Heart right ventricle (tissue), 16 donors: ENCODE measurements at regions of chr1 and their contacts with region 1.

Region 1: GRCh38 chr1:17045634-17046333 is 8.0 kb downstream of the SDHB start:
- DNase-seq: no peak
- ATAC-seq: peak; percentile 46 to 85 (median 68)
- H3K4me3 ChIP-seq: peak overlapping the region in 4 of 10 donors; percentile 18 to 31 (median 28)
- H3K27ac ChIP-seq: peak overlapping the region in 2 of 10 donors; percentile 2 to 54
- H3K4me1 ChIP-seq: peaks cover 0 to 42% (median 24%) of the 10 kb centered on the region in 9 donors
- H3K27me3 ChIP-seq: no peaks in the 10 kb centered on the region
- CTCF ChIP-seq: peak; percentile 55 to 88 (median 76)

Region 2: DNA sequence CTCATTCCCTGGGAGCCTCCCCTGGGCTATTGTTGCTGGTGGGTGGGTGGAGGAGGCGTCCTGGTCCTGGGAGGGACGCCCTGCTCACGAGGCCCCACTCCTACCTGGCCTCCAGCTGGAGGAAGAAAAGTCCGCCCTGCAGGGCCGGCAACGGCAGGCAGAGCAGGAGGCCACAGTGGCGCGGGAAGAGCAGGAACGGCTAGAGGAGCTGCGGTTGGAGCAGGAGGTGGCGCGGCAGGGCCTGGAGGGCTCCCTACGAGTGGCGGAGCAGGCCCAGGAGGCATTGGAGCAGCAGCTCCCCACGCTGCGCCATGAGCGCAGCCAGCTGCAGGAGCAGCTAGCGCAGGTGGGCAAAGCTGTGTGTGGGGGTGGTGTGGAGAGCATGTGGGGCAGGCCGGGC is 99.1 kb before region 1 on chr1:
- intact Hi-C with region 1: loop called in 9 of 10 experiments (anchors 1 to 5 kb)
- DNase-seq: no peak
- ATAC-seq: peak in 2 of 8 donors; percentile 9 to 19
- H3K4me3 ChIP-seq: no peak overlapping the region
- H3K27ac ChIP-seq: no peak overlapping the region
- H3K4me1 ChIP-seq: peaks cover 0 to 2% (median 0%) of the 10 kb centered on the region in 9 donors
- H3K27me3 ChIP-seq: no peaks in the 10 kb centered on the region
- CTCF ChIP-seq: no peak

Region 3: GRCh38 chr1:16954579-16954978 is 91.2 kb before region 1 on chr1:
- intact Hi-C with region 1: loop called (anchors 1 to 5 kb)
- DNase-seq: no peak
- ATAC-seq: no peak
- H3K4me3 ChIP-seq: no peak overlapping the region
- H3K27ac ChIP-seq: no peak overlapping the region
- H3K4me1 ChIP-seq: peaks cover 0 to 6% (median 0%) of the 10 kb centered on the region in 9 donors
- H3K27me3 ChIP-seq: no peaks in the 10 kb centered on the region
- CTCF ChIP-seq: no peak

Region 4: DNA sequence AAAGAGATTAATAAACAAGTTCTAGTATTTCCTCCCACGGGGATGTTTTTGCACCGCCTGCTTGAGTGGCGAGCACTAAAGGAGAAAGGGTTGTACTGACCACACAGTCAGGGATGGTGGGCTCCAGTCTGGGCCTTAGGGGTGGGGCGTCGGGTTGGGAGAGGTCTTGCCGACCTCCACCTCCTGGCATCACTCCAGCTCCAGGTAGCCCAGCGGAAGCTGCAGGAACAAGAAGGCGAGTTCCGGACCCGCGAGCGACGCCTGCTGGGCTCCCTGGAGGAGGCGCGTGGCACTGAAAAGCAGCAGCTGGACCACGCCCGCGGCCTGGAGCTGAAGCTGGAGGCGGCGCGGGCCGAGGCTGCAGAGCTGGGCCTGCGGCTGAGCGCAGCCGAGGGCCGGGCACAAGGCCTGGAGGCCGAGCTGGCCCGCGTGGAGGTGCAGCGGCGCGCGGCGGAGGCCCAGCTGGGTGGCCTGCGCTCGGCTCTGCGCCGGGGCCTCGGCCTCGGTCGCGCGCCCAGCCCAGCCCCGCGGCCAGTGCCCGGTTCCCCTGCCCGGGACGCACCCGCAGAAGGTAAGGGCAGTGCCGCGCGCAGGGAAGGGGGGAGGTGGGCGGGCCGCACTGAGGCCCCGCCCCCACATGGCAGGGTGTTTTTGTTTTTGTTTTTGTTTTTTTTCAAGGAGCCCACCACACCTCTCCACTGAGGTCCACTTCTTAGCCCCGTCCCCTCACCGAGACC is 85.1 kb before region 1 on chr1:
- intact Hi-C with region 1: loop called in 3 of 10 experiments (anchors 5 kb)
- DNase-seq: peak; percentile 72 to 81
- ATAC-seq: peak; percentile 70 to 92 (median 78)
- H3K4me3 ChIP-seq: peak overlapping the region in 8 of 10 donors; percentile 21 to 48 (median 42)
- H3K27ac ChIP-seq: peak overlapping the region in 3 of 10 donors; percentile 25 to 43 (median 34)
- H3K4me1 ChIP-seq: peaks cover 0 to 22% (median 0%) of the 10 kb centered on the region in 9 donors
- H3K27me3 ChIP-seq: no peaks in the 10 kb centered on the region
- CTCF ChIP-seq: peak; percentile 10 to 71 (median 59)

Region 5: DNA sequence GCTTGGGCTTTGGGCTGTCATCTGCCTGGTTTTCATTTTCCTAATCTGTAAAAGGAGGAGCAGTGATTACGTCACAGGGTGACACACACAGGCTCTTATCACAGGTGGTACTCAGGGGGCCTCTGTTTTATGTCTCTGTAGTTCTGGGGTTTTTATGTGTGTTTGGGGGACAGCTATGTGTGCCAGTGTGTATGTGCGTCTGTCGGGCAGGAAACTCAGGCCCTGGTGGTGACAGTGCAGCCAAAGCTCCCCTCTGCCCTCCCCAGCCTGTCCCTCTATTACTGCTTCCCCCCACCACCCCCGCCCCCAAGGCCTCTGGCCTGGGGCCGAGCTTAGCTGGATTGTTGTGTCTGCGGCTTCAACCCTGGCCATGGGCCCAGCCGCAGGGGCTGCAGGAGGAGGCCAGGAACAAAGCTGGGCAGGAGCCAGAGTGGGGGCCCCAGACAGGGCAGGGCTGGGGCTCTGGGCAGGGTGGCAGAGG is 78.6 kb before region 1 on chr1:
- intact Hi-C with region 1: loop called in 2 of 10 experiments (anchors 5 kb)
- DNase-seq: peak; percentile 60 to 67
- ATAC-seq: peak; percentile 34 to 87 (median 72)
- H3K4me3 ChIP-seq: no peak overlapping the region
- H3K27ac ChIP-seq: peak overlapping the region in 3 of 10 donors; percentile 31 to 41 (median 35)
- H3K4me1 ChIP-seq: peaks cover 0 to 23% (median 12%) of the 10 kb centered on the region in 9 donors
- H3K27me3 ChIP-seq: no peaks in the 10 kb centered on the region
- CTCF ChIP-seq: no peak

Region 6: GRCh38 chr1:17011439-17012307 is 34.1 kb before region 1 on chr1 and contains the start of gene ATP13A2:
- intact Hi-C with region 1: loop called in 2 of 10 experiments (anchors 5 kb)
- DNase-seq: peak; percentile 70 to 85
- ATAC-seq: peak; percentile 87 to 98 (median 92)
- H3K4me3 ChIP-seq: peak within 1 kb of the TSS; percentile 64 to 99 (median 92)
- H3K27ac ChIP-seq: peak within 1 kb of the TSS in 9 of 10 donors; percentile 58 to 82 (median 79)
- H3K4me1 ChIP-seq: peaks cover 7 to 51% (median 26%) of the 10 kb centered on the region in 9 donors
- H3K27me3 ChIP-seq: no peaks in the 10 kb centered on the region
- CTCF ChIP-seq: no peak
- total RNA-seq, gene ATP13A2: 7.2 to 20.0 (median 10.6) TPM